ENCODE measurements at regions of chr13 and their contacts with region 1.

Region 1: DNA sequence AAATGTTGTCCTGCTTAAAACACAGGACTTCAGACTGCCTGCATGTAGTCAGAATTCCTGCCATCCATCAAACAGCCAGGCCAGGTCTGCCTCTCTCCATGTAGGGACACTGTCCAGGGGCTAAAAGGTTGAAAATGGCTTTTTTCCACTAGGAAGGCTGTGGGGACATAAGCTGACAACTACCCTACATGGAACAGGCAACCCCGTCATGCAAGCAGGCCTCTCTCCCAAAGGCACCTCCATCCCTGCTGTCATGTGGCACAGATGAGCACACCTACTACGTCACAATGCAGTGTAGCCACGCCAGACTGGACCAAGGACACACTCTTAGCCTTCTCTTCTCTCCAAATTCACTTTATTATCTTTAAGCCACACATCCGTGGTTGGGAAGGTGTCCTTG is 40.8 kb downstream of the LATS2 start:
- DNase-seq: no peak
- H3K4me3 ChIP-seq: no peak overlapping the region
- H3K4me3 Mint-ChIP-seq: no peak overlapping the region
- H3K27ac Mint-ChIP-seq: no peak overlapping the region
- H3K4me1 ChIP-seq: peaks cover 15% of the 10 kb centered on the region; the same call in 1 of the 2 replicates
- H3K4me1 Mint-ChIP-seq: peaks cover 24% of the 10 kb centered on the region
- H3K27me3 ChIP-seq: no peaks in the 10 kb centered on the region
- H3K27me3 Mint-ChIP-seq: no peaks in the 10 kb centered on the region
- CTCF ChIP-seq: no peak

Region 2: GRCh38 chr13:21006141-21007005 is 14.2 kb before region 1 on chr13:
- CTCF ChIA-PET with region 1: no interaction called
- POLR2A ChIA-PET with region 1: no interaction called
- intact Hi-C with region 1: loop called (anchors 2 kb)
- DNase-seq: no peak
- H3K4me3 ChIP-seq: no peak overlapping the region
- H3K4me3 Mint-ChIP-seq: no peak overlapping the region
- H3K27ac Mint-ChIP-seq: peak overlapping the region; percentile 84
- H3K4me1 ChIP-seq: peaks cover 26% of the 10 kb centered on the region
- H3K4me1 Mint-ChIP-seq: peaks cover 30% of the 10 kb centered on the region
- H3K27me3 ChIP-seq: no peaks in the 10 kb centered on the region; the same call in 1 of the 2 replicates
- H3K27me3 Mint-ChIP-seq: no peaks in the 10 kb centered on the region
- CTCF ChIP-seq: no peak